ENCODE measurements at regions of chr7 and their contacts with region 1.

Region 1: GRCh38 chr7:151110941-151111645 is 24.8 kb downstream of the AGAP3 start:
- DNase-seq: peak; percentile 54 to 82 (median 64)
- H3K4me3 ChIP-seq: no peak overlapping the region
- H3K4me3 Mint-ChIP-seq: no peak overlapping the region
- H3K27ac ChIP-seq: no peak overlapping the region
- H3K27ac Mint-ChIP-seq: peak overlapping the region in 2 of 8 donors; percentile 9 to 58
- H3K4me1 ChIP-seq: peaks cover 8% of the 10 kb centered on the region
- H3K4me1 Mint-ChIP-seq: peaks cover 0 to 15% (median 4%) of the 10 kb centered on the region in 3 donors
- H3K27me3 ChIP-seq: no peaks in the 10 kb centered on the region
- H3K27me3 Mint-ChIP-seq: peaks cover 4 to 5% of the 10 kb centered on the region in 2 donors

Region 2: DNA sequence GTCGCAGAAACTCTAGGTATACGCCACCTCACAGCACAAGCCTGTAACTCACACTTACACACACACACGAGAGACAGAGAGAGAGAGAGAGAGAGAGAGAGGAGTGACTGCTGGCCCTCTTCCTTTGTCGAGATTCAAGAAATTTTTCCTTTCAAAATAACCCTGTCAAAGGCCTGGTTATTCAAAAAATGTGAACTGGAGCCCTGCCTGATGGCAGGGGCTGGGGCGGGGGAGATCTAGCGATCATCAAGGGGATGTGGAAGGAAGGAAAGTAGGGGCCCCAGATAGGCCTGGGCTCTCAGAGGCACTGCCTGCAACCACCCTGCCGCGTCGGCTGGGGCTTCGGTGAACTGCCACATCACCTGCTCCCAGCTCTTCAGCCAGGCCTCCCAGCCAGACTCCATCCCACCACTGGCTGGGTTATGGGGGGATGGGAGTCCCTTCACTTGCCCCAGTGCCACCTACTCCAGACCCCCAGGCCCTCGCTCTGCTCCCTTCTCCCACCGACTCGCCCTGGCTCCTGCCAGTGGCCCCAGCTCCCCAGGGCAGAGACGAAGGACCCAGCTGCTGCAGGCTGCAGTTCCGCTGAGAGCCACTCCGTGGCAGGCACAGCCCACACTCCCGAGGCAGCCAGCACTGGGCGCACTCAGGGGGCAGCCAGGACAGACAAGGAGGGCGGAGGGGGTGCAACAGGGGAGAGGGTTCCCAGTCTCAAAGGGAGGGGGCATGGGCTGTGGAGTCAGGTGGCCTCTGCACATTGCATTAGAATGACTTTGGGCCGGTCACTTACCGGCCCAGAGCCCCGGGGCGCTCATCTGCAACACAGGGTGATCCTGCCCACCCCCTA is 148.3 kb before region 1 on chr7:
- CTCF ChIA-PET with region 1: interaction called, 34 read pairs
- POLR2A ChIA-PET with region 1: no interaction called
- DNase-seq: peak; percentile 35 to 69 (median 50)
- H3K4me3 ChIP-seq: no peak overlapping the region
- H3K4me3 Mint-ChIP-seq: peak overlapping the region in 1 of 7 donors; percentile 79
- H3K27ac ChIP-seq: peak overlapping the region; percentile 76
- H3K27ac Mint-ChIP-seq: no peak overlapping the region
- H3K4me1 ChIP-seq: peaks cover 9% of the 10 kb centered on the region
- H3K4me1 Mint-ChIP-seq: peaks cover 2 to 10% (median 4%) of the 10 kb centered on the region in 3 donors
- H3K27me3 ChIP-seq: peaks cover 7% of the 10 kb centered on the region
- H3K27me3 Mint-ChIP-seq: peaks cover 19 to 28% of the 10 kb centered on the region in 2 donors

Region 3: DNA sequence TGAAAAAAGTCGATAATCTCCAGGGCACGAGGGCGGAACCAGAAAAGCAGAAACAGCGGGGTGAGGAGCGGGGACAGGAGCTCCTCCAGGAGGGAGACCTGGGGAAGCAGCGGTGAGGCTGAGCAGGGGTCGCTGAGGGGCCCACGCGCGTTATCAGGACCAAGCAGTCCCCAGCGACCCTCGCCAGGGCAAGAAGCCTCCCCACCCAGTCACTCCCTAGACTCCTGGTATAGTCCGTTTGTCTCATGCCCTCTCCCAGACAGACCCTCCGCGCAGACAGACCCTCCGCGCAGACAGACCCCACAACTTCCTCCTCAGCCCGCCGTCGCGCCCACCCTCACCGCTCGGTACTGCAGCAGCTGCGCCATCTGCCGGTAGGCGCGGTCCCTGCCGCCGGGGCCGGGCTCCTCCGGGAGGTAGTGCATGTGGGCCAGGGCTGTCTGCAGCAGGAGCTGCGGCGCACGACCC is 93.1 kb before region 1 on chr7:
- CTCF ChIA-PET with region 1: interaction called, 39 read pairs
- POLR2A ChIA-PET with region 1: no interaction called
- DNase-seq: peak; percentile 72 to 86 (median 73)
- H3K4me3 ChIP-seq: peak overlapping the region; percentile 67
- H3K4me3 Mint-ChIP-seq: peak overlapping the region; percentile 80 to 93 (median 85)
- H3K27ac ChIP-seq: no peak overlapping the region
- H3K27ac Mint-ChIP-seq: peak overlapping the region; percentile 66 to 96 (median 90)
- H3K4me1 ChIP-seq: peaks cover 58% of the 10 kb centered on the region
- H3K4me1 Mint-ChIP-seq: peaks cover 39 to 61% (median 46%) of the 10 kb centered on the region in 3 donors
- H3K27me3 ChIP-seq: no peaks in the 10 kb centered on the region
- H3K27me3 Mint-ChIP-seq: peaks cover 15 to 22% of the 10 kb centered on the region in 2 donors

Region 4: GRCh38 chr7:151028131-151028947 is 82.8 kb before region 1 on chr7 and contains the start of gene ABCB8:
- CTCF ChIA-PET with region 1: interaction called, 20 read pairs
- POLR2A ChIA-PET with region 1: no interaction called
- DNase-seq: peak; percentile 93 to 99 (median 99)
- H3K4me3 ChIP-seq: peak within 1 kb of the TSS; percentile 100
- H3K4me3 Mint-ChIP-seq: peak within 1 kb of the TSS; percentile 87 to 98 (median 96)
- H3K27ac ChIP-seq: peak within 1 kb of the TSS; percentile 90
- H3K27ac Mint-ChIP-seq: peak within 1 kb of the TSS; percentile 98 to 100 (median 99)
- H3K4me1 ChIP-seq: peaks cover 20% of the 10 kb centered on the region
- H3K4me1 Mint-ChIP-seq: peaks cover 18 to 35% (median 28%) of the 10 kb centered on the region in 3 donors
- H3K27me3 ChIP-seq: no peaks in the 10 kb centered on the region
- H3K27me3 Mint-ChIP-seq: peaks cover 0 to 1% of the 10 kb centered on the region in 2 donors
- total RNA-seq, gene ABCB8: 49.2 to 52.3 TPM

Region 5: GRCh38 chr7:151057989-151058780 is 52.9 kb before region 1 on chr7:
- CTCF ChIA-PET with region 1: interaction called, 19 read pairs
- POLR2A ChIA-PET with region 1: interaction called, 3 read pairs
- DNase-seq: peak; percentile 94 to 99 (median 96)
- H3K4me3 ChIP-seq: peak overlapping the region; percentile 94
- H3K4me3 Mint-ChIP-seq: peak overlapping the region; percentile 88 to 95 (median 94)
- H3K27ac ChIP-seq: peak overlapping the region; percentile 91
- H3K27ac Mint-ChIP-seq: peak overlapping the region; percentile 88 to 98 (median 98)
- H3K4me1 ChIP-seq: peaks cover 39% of the 10 kb centered on the region
- H3K4me1 Mint-ChIP-seq: peaks cover 24 to 47% (median 36%) of the 10 kb centered on the region in 3 donors
- H3K27me3 ChIP-seq: no peaks in the 10 kb centered on the region
- H3K27me3 Mint-ChIP-seq: no peaks in the 10 kb centered on the region

Region 6: DNA sequence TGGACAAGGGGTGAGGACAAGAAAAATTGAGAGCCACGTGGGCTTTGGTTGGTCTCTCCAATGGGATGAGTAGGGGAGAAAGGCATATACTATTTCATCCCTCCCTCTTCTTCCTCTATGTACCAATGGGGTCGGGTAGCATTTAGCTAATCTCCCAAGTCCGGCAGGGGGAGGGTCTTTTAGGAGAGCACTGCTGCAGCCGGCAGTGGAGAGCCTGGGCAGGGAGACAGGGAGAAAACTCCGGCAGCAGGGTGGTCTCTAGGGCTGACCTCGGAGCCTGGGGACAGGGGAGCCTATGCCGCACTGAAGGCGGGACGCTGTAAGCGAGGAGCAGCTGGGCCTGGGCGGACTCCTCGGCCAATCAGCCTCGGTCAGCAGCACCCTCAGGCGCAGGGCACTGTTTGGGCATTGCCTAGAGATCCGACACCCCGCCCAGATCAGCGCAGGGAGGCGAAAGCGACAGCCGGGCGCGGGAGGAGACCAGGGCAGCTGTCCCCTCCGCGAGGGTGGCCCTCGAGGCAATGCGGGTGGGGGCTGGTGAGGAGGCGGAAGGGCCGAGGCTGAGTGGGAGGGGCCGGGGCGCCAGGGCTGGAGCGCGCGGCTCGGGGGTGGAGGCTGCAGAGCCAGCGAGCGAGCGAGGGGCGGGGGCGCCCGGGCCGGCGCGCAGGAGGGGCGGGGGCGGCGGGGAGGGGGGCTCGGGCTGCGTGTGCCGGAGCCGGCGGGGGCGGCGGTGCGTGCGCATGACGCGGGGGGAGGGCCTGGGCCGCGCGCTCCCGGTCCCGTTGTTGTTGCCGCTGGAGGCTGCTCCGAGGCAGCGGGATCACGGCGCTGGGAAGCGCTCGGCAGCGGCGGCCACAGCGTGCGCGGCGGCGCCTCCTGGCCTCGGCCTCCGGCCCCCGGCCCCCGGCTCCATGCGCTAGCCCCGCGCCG is 25.1 kb before region 1 on chr7 and contains the start of gene AGAP3:
- CTCF ChIA-PET with region 1: interaction called, 25 read pairs
- POLR2A ChIA-PET with region 1: no interaction called
- DNase-seq: peak; percentile 48 to 73 (median 59)
- H3K4me3 ChIP-seq: peak within 1 kb of the TSS; percentile 65
- H3K4me3 Mint-ChIP-seq: peak within 1 kb of the TSS; percentile 87 to 94 (median 90)
- H3K27ac ChIP-seq: peak within 1 kb of the TSS; percentile 74
- H3K27ac Mint-ChIP-seq: peak within 1 kb of the TSS; percentile 71 to 97 (median 91)
- H3K4me1 ChIP-seq: peaks cover 54% of the 10 kb centered on the region
- H3K4me1 Mint-ChIP-seq: peaks cover 35 to 59% (median 35%) of the 10 kb centered on the region in 3 donors
- H3K27me3 ChIP-seq: no peaks in the 10 kb centered on the region
- H3K27me3 Mint-ChIP-seq: peaks cover 0 to 14% of the 10 kb centered on the region in 2 donors
- total RNA-seq, gene AGAP3: 39.9 to 40.7 TPM

Region 7: GRCh38 chr7:151123822-151124464 is 12.8 kb after region 1 on chr7:
- CTCF ChIA-PET with region 1: interaction called, 37 read pairs
- POLR2A ChIA-PET with region 1: no interaction called
- DNase-seq: peak; percentile 72 to 86 (median 76)
- H3K4me3 ChIP-seq: no peak overlapping the region
- H3K4me3 Mint-ChIP-seq: no peak overlapping the region
- H3K27ac ChIP-seq: no peak overlapping the region
- H3K27ac Mint-ChIP-seq: peak overlapping the region in 2 of 8 donors; percentile 1 to 74
- H3K4me1 ChIP-seq: no peaks in the 10 kb centered on the region
- H3K4me1 Mint-ChIP-seq: peaks cover 5 to 7% (median 5%) of the 10 kb centered on the region in 3 donors
- H3K27me3 ChIP-seq: no peaks in the 10 kb centered on the region
- H3K27me3 Mint-ChIP-seq: no peaks in the 10 kb centered on the region

Region 8: DNA sequence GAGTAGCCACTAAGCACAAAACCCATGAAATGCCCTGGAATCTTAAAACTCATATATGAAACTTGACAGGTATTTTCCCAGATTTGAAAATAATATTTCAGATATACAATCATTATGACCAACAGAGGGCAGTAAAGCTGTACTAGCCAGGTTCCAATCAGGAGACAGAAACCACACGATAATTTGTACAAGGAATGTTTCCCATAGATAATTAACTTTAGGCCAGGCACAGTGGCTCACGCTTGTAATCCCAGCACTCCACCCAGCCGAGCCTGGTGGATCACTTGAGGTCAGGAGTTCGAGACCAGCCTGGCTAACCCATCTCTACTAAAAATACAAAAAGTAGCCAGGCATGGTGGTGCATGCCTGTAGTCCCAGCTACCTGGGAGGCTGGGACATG is 199.5 kb after region 1 on chr7:
- CTCF ChIA-PET with region 1: no interaction called
- POLR2A ChIA-PET with region 1: no interaction called
- DNase-seq: no peak
- H3K4me3 ChIP-seq: no peak overlapping the region
- H3K4me3 Mint-ChIP-seq: no peak overlapping the region
- H3K27ac ChIP-seq: no peak overlapping the region
- H3K27ac Mint-ChIP-seq: no peak overlapping the region
- H3K4me1 ChIP-seq: no peaks in the 10 kb centered on the region
- H3K4me1 Mint-ChIP-seq: peaks cover 3 to 5% (median 4%) of the 10 kb centered on the region in 3 donors
- H3K27me3 ChIP-seq: no peaks in the 10 kb centered on the region
- H3K27me3 Mint-ChIP-seq: peaks cover 4 to 30% of the 10 kb centered on the region in 2 donors